WTC11 (cell line): ENCODE measurements at regions of chr19 and their contacts with region 1.

Region 1: GRCh38 chr19:506404-507285 is 652 bp upstream of the TPGS1 start:
- DNase-seq: peak; percentile 91
- ATAC-seq: peak; percentile 72
- H3K4me3 Mint-ChIP-seq: peak overlapping the region; percentile 93
- H3K27ac Mint-ChIP-seq: peak overlapping the region; percentile 100
- H3K4me1 Mint-ChIP-seq: peaks cover 17% of the 10 kb centered on the region
- H3K27me3 Mint-ChIP-seq: peaks cover 17% of the 10 kb centered on the region
- CTCF ChIP-seq: peak; percentile 84

Region 2: DNA sequence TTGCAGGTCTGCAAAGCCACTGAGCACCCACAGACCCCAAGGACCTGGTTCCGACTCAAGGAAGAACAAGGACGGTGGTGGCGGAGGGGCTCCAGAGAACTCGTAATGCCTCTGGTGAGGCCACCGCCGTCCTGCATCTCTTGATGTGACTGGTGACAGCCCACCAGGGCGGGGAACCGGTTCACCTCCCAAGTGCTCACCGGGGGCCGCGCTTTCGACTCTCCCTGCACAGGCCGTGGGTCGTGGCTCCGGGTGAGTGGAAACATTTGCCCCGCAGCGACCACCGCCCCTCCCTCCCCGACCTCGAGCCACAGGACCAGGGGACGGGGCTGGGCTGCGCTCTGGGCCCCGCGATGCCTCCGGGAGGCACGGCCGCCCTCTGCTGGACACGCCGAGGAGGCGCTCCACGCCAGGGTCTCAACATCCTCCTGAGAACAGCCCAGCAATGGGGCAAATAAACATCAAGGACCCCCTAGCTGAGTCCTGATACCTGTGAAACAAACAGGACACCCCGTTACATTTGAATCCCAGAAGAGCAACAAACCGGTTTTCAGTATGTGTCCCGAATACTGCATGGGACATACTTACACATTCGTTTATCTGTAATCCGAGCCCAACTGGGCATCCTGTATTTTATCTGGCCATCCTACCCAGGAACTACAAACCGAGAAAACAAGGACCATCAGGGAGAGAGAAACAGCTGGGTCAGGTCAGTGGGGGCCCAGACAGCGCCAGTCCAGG is 211.5 kb before region 1 on chr19:
- CTCF ChIA-PET with region 1: interaction called, 12 read pairs
- POLR2A ChIA-PET with region 1: no interaction called
- DNase-seq: peak; percentile 79
- ATAC-seq: peak; percentile 75
- H3K4me3 Mint-ChIP-seq: peak overlapping the region; percentile 52
- H3K27ac Mint-ChIP-seq: peak overlapping the region; percentile 36; the same call in 1 of the 2 replicates
- H3K4me1 Mint-ChIP-seq: peaks cover 26% of the 10 kb centered on the region
- H3K27me3 Mint-ChIP-seq: peaks cover 13% of the 10 kb centered on the region
- CTCF ChIP-seq: peak; percentile 77; the same call in 1 of the 2 replicates

Region 3: GRCh38 chr19:383922-384798 is 122.5 kb before region 1 on chr19:
- CTCF ChIA-PET with region 1: interaction called, 32 read pairs
- POLR2A ChIA-PET with region 1: interaction called, 4 read pairs
- DNase-seq: peak; percentile 83
- ATAC-seq: peak; percentile 98
- H3K4me3 Mint-ChIP-seq: no peak overlapping the region
- H3K27ac Mint-ChIP-seq: no peak overlapping the region
- H3K4me1 Mint-ChIP-seq: peaks cover 28% of the 10 kb centered on the region
- H3K27me3 Mint-ChIP-seq: peaks cover 17% of the 10 kb centered on the region
- CTCF ChIP-seq: peak; percentile 68

Region 4: GRCh38 chr19:459724-460511 is 46.7 kb before region 1 on chr19:
- CTCF ChIA-PET with region 1: interaction called, 17 read pairs
- POLR2A ChIA-PET with region 1: no interaction called
- DNase-seq: peak; percentile 60
- ATAC-seq: peak; percentile 17
- H3K4me3 Mint-ChIP-seq: peak overlapping the region; percentile 73
- H3K27ac Mint-ChIP-seq: no peak overlapping the region
- H3K4me1 Mint-ChIP-seq: peaks cover 6% of the 10 kb centered on the region; the same call in 1 of the 2 replicates
- H3K27me3 Mint-ChIP-seq: peaks cover 35% of the 10 kb centered on the region
- CTCF ChIP-seq: no peak

Region 5: GRCh38 chr19:488505-489417 is 17.9 kb before region 1 on chr19:
- CTCF ChIA-PET with region 1: interaction called, 46 read pairs
- POLR2A ChIA-PET with region 1: interaction called, 7 read pairs
- DNase-seq: peak; percentile 94
- ATAC-seq: peak; percentile 83
- H3K4me3 Mint-ChIP-seq: peak overlapping the region; percentile 78
- H3K27ac Mint-ChIP-seq: no peak overlapping the region
- H3K4me1 Mint-ChIP-seq: peaks cover 26% of the 10 kb centered on the region
- H3K27me3 Mint-ChIP-seq: peaks cover 15% of the 10 kb centered on the region
- CTCF ChIP-seq: no peak

Region 6: DNA sequence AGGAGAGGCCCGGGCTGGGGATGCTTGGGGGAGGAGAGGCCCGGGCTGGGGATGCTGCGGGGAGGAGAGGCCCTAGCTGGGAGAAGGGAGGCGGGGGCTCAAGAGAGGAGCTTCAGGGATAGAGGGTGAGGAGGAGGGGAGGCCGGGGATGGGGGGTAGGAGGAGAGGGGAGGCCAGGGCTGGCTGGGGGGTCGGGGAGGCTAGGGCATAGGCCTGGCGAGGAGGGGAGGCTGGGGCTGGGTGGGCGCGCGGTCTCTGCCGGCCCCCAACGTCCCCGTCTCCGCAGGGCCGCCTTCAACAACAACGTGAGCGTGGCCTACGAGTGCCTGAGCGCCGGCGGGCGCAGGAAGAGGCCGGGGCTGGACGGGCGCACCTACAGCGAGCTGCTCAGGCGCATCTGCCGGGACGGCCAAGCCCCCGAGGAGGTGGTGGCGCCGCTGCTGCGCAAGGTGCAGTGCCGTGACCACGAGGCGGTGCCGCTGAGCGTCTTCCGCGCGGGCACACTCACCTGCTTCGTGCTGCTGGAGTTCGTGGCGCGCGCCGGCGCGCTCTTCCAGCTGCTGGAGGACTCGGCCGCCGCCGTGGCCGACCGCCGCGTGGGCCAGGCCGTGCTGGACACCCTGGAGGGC is 12.1 kb after region 1 on chr19:
- CTCF ChIA-PET with region 1: interaction called, 29 read pairs
- POLR2A ChIA-PET with region 1: interaction called, 6 read pairs
- DNase-seq: peak; percentile 79
- ATAC-seq: peak; percentile 87
- H3K4me3 Mint-ChIP-seq: no peak overlapping the region
- H3K27ac Mint-ChIP-seq: no peak overlapping the region
- H3K4me1 Mint-ChIP-seq: peaks cover 3% of the 10 kb centered on the region
- H3K27me3 Mint-ChIP-seq: peaks cover 33% of the 10 kb centered on the region
- CTCF ChIP-seq: no peak

Region 7: DNA sequence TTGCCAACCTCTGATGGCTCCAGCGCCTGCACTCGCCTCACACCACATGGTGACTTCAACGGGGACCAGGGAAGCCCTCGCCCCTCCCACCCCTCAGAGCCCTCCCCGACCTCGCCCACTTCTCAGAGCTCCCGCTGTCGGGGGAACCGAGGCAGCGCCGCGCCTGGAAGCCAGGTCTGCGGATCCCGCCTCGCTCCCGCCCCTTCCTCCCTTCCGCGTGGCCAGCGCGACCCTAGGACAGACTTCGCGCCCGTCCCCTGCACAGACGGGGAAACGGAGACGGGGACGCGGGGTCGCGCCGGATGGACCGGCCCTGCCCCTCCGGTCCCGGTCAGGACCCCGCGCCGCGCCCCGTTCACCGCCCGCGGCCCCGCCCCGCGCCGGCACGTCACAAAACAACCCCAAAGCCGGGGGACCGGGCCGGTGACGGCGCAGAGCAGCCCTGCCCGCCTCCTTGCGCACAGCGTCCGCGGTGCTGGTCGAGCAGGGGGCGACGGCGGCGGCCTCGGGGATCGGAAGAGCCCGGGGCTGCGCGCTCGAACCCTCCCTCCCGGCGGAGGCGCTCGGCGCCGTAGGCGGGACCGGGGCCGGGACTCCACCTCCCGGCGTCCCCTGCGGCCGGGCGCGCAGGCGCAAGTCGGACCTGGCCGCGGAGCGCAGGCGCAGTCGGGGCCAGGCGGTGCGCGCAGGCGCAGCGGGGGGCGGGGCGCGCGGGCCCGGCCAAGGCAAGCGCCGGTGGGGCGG is 24.5 kb after region 1 on chr19:
- CTCF ChIA-PET with region 1: interaction called, 82 read pairs
- POLR2A ChIA-PET with region 1: interaction called, 8 read pairs
- DNase-seq: peak; percentile 82
- ATAC-seq: peak; percentile 79
- H3K4me3 Mint-ChIP-seq: peak overlapping the region; percentile 76
- H3K27ac Mint-ChIP-seq: 0 out of 2 replicates have a peak overlapping the region, but pooled peaks have one; percentile 70
- H3K4me1 Mint-ChIP-seq: peaks cover 10% of the 10 kb centered on the region
- H3K27me3 Mint-ChIP-seq: peaks cover 9% of the 10 kb centered on the region
- CTCF ChIP-seq: no peak